AG04450 (cell line): ENCODE measurements at regions of chr3 and their contacts with region 1.

Region 1: GRCh38 chr3:120558771-120559241 is 37.3 kb upstream of the NDUFB4 start:
- DNase-seq: peak; percentile 76
- H3K4me3 ChIP-seq: peak overlapping the region; percentile 72
- H3K27ac ChIP-seq: peak overlapping the region; percentile 86
- H3K27me3 ChIP-seq: no peaks in the 10 kb centered on the region
- CTCF ChIP-seq: peak; percentile 92

Region 2: DNA sequence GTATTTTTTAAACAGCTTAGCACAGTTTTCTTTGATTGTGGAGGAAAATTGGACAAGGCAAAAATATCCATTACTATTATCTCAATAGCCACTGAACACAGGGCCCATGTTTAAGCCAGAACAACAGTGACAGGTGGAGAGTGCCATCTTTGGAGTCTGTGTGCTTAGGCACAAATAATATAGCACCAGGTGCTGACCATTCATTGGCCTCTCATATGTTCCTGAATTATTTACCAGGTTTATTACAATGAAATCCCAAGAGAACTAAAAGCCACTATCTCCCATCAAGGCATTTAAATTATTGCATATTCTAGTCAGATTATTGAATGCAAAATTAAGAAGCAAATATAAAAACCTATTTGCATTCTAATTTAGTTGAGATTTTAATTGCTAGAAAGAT is 313.4 kb before region 1 on chr3:
- CTCF ChIA-PET with region 1: interaction called, 93 read pairs
- POLR2A ChIA-PET with region 1: interaction called, 4 read pairs
- DNase-seq: no peak
- H3K4me3 ChIP-seq: no peak overlapping the region
- H3K27ac ChIP-seq: no peak overlapping the region
- H3K27me3 ChIP-seq: no peaks in the 10 kb centered on the region
- CTCF ChIP-seq: no peak

Region 3: GRCh38 chr3:120410541-120410940 is 148.3 kb before region 1 on chr3:
- CTCF ChIA-PET with region 1: interaction called, 209 read pairs
- POLR2A ChIA-PET with region 1: no interaction called
- DNase-seq: no peak
- H3K4me3 ChIP-seq: no peak overlapping the region
- H3K27ac ChIP-seq: no peak overlapping the region
- H3K27me3 ChIP-seq: no peaks in the 10 kb centered on the region
- CTCF ChIP-seq: no peak

Region 4: GRCh38 chr3:120438665-120439370 is 120.0 kb before region 1 on chr3:
- CTCF ChIA-PET with region 1: interaction called, 33 read pairs
- POLR2A ChIA-PET with region 1: interaction called, 3 read pairs
- DNase-seq: peak; percentile 71
- H3K4me3 ChIP-seq: no peak overlapping the region; the same call in 1 of the 2 replicates
- H3K27ac ChIP-seq: peak overlapping the region; percentile 82
- H3K27me3 ChIP-seq: no peaks in the 10 kb centered on the region
- CTCF ChIP-seq: no peak

Region 5: GRCh38 chr3:120544361-120544760 is 14.4 kb before region 1 on chr3:
- CTCF ChIA-PET with region 1: interaction called, 19 read pairs
- POLR2A ChIA-PET with region 1: no interaction called
- DNase-seq: no peak
- H3K4me3 ChIP-seq: no peak overlapping the region
- H3K27ac ChIP-seq: no peak overlapping the region
- H3K27me3 ChIP-seq: peaks cover 2% of the 10 kb centered on the region
- CTCF ChIP-seq: no peak

Region 6: DNA sequence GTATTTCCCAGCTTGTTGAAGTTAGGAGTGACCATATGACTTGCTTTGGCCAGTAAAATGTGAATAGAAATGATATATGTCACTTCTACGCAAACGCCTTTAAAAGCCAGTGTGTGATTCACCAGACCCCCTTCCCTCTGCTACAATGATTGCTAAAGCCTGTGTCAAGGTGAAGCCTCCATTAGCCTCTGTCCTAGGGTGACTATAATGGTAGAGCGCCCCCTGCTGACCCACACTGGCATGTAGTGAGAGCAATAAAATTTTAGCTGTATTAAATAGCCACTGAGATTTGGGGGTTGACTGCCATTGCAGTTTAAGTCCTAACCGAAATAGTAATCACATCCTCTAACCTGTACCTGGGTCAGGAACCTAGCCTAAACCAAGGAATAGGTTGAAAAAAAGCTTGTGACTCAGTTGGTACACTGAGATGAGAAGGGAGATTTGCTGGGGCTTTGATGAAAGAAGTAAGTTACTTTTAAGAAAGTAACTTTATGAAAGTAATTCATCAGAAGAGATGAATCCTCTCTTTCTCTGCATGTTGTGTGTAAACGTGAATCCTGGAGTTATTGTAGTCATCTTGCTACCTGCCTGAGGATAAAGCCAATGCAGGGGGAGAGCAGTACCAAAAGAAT is 236.3 kb after region 1 on chr3:
- CTCF ChIA-PET with region 1: interaction called, 149 read pairs
- POLR2A ChIA-PET with region 1: interaction called, 3 read pairs
- DNase-seq: peak; percentile 42
- H3K4me3 ChIP-seq: no peak overlapping the region
- H3K27ac ChIP-seq: no peak overlapping the region
- H3K27me3 ChIP-seq: no peaks in the 10 kb centered on the region
- CTCF ChIP-seq: peak; percentile 83